T-cell (primary cell): ENCODE measurements at regions of chr5 and their contacts with region 1.

Region 1: GRCh38 chr5:133051580-133052332 is at the start of gene HSPA4:
- DNase-seq: peak; percentile 92 to 100 (median 97)
- ATAC-seq: peak; percentile 87 to 89 (median 88)
- H3K4me3 ChIP-seq: peak within 1 kb of the TSS; percentile 79 to 89
- H3K4me3 Mint-ChIP-seq: peak within 1 kb of the TSS; percentile 95 to 97 (median 96)
- H3K27ac ChIP-seq: peak within 1 kb of the TSS; percentile 100
- H3K27ac Mint-ChIP-seq: peak within 1 kb of the TSS; percentile 98 to 100
- H3K4me1 ChIP-seq: peaks cover 20 to 44% of the 10 kb centered on the region in 2 experiments
- H3K4me1 Mint-ChIP-seq: peaks cover 58 to 63% (median 61%) of the 10 kb centered on the region in 3 donors
- H3K27me3 ChIP-seq: peaks cover 0 to 3% of the 10 kb centered on the region in 2 experiments
- H3K27me3 Mint-ChIP-seq: no peaks in the 10 kb centered on the region
- total RNA-seq, gene HSPA4: 47.0 to 55.3 (median 48.1) TPM

Region 2: GRCh38 chr5:132073231-132074013 is 978.3 kb before region 1 on chr5 and contains the start of gene CSF2:
- CTCF ChIA-PET with region 1: no interaction called
- POLR2A ChIA-PET with region 1: no interaction called
- DNase-seq: no peak
- ATAC-seq: peak in 1 of 4 experiments; percentile 14
- H3K4me3 ChIP-seq: no peak within 1 kb of the TSS
- H3K4me3 Mint-ChIP-seq: no peak within 1 kb of the TSS
- H3K27ac ChIP-seq: no peak within 1 kb of the TSS
- H3K27ac Mint-ChIP-seq: peak within 1 kb of the TSS in 1 of 2 donors; percentile 39
- H3K4me1 ChIP-seq: peaks cover 0 to 30% of the 10 kb centered on the region in 2 experiments
- H3K4me1 Mint-ChIP-seq: peaks cover 0 to 52% (median 23%) of the 10 kb centered on the region in 3 donors
- H3K27me3 ChIP-seq: no peaks in the 10 kb centered on the region
- H3K27me3 Mint-ChIP-seq: no peaks in the 10 kb centered on the region
- total RNA-seq, gene CSF2: 0.89 TPM in 1 of 5 donors, not detected in the others

Region 3: DNA sequence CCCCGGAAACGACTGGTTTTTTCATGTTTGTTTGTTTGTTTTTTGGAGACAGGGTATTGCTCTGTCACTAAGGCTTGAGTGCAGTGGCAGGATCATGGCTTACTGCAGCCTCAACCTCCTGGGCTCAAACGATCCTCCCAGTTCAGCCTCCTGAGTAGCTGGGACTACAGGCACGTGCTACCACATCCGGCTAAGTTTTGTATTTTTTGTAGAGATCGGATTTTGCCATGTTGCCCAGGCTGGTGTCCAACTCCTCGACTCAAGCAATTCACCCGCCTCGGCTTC is 63.7 kb before region 1 on chr5:
- CTCF ChIA-PET with region 1: interaction called in 1 of 2 experiments, 3 read pairs
- POLR2A ChIA-PET with region 1: interaction called in 1 of 2 experiments, 12 read pairs
- DNase-seq: no peak
- ATAC-seq: no peak
- H3K4me3 ChIP-seq: no peak overlapping the region
- H3K4me3 Mint-ChIP-seq: no peak overlapping the region
- H3K27ac ChIP-seq: no peak overlapping the region
- H3K27ac Mint-ChIP-seq: no peak overlapping the region
- H3K4me1 ChIP-seq: no peaks in the 10 kb centered on the region
- H3K4me1 Mint-ChIP-seq: no peaks in the 10 kb centered on the region
- H3K27me3 ChIP-seq: peaks cover 0 to 2% of the 10 kb centered on the region in 2 experiments
- H3K27me3 Mint-ChIP-seq: no peaks in the 10 kb centered on the region